Transverse colon (tissue), 4 donors: ENCODE measurements at regions of chr22 and their contacts with region 1.

Region 1: DNA sequence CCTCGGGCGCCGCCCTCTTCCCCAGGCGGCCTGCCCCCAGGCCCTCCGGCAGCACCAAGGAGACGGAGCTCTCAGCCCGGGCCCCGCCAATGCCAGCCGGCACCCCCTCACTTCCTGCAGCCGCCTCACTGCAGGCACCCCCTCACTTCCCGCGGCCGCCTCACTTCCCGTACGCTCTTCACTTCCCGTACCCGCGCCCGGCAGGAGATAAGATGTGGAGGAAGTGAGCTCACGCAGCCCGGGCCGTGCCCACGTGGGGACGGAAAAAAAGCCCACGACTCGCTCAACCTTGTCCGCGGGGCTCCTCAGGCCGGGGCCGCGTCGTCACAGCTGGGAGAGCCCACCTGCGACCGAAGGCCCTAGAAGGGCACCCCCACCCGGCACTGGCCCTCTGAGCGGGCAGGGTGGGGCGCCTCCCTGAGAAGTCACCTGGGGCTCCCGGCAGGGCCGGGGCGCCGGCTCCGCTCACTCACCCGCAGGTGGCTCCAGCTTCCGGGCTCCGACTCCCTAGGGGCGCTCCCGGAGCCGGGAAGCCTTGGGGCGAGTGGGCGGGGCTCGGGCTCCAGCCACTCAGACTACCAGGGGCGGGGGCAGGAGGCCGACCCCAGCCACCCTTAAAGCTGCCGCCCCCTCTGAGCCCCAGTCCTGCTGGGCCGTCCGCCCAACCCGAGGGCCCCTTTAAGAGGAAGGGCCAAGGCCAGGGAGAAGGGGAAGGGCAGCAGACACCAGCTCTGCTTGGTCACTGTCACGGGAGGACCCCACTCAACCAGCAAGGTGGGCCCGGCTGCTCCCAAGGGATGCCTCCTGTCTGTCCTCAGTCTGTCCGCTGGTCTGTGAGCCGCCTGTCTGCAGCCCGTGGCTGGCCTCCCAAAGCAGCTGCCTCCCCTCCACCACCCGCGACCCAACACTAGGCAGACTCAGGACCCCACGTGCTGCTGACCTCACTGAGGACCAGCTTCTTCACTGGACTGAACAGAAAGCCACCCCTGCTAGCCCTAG is 31.4 kb downstream of the PISD start:
- DNase-seq: peak; percentile 81
- H3K4me3 ChIP-seq: peak overlapping the region; percentile 68 to 90 (median 78)
- H3K27ac ChIP-seq: peak overlapping the region; percentile 84 to 89 (median 87)
- H3K4me1 ChIP-seq: peaks cover 19 to 50% (median 39%) of the 10 kb centered on the region in 4 donors
- H3K27me3 ChIP-seq: no peaks in the 10 kb centered on the region
- CTCF ChIP-seq: no peak
- EP300 ChIP-seq: no peak
- POLR2A ChIP-seq: peak; percentile 27

Region 2: GRCh38 chr22:31489604-31490495 is 140.8 kb before region 1 on chr22 and contains the start of gene EIF4ENIF1:
- in situ Hi-C with region 1: loop called in 1 of 4 experiments (anchors 25 kb)
- intact Hi-C with region 1: loop called (anchors 5 kb)
- DNase-seq: peak; percentile 89
- H3K4me3 ChIP-seq: peak within 1 kb of the TSS; percentile 68 to 94 (median 90)
- H3K27ac ChIP-seq: peak within 1 kb of the TSS; percentile 93 to 99 (median 96)
- H3K4me1 ChIP-seq: peaks cover 16 to 30% (median 22%) of the 10 kb centered on the region in 4 donors
- H3K27me3 ChIP-seq: no peaks in the 10 kb centered on the region
- CTCF ChIP-seq: peak in 1 of 5 experiments; percentile 11
- EP300 ChIP-seq: no peak
- POLR2A ChIP-seq: peak; percentile 67
- total RNA-seq, gene EIF4ENIF1: 14.4 to 66.1 (median 17.2) TPM

Region 3: GRCh38 chr22:31496007-31496734 is 134.5 kb before region 1 on chr22 and contains the start of gene SFI1:
- in situ Hi-C with region 1: loop called in 1 of 4 experiments (anchors 25 kb)
- intact Hi-C with region 1: no loop called
- DNase-seq: peak; percentile 95
- H3K4me3 ChIP-seq: peak within 1 kb of the TSS; percentile 49 to 74 (median 60)
- H3K27ac ChIP-seq: peak within 1 kb of the TSS; percentile 84 to 94 (median 88)
- H3K4me1 ChIP-seq: peaks cover 7 to 23% (median 14%) of the 10 kb centered on the region in 4 donors
- H3K27me3 ChIP-seq: no peaks in the 10 kb centered on the region
- CTCF ChIP-seq: peak; percentile 14 to 37 (median 27)
- EP300 ChIP-seq: no peak
- POLR2A ChIP-seq: peak; percentile 58
- total RNA-seq, gene SFI1: 55.3 to 157 (median 90.1) TPM

Region 4: DNA sequence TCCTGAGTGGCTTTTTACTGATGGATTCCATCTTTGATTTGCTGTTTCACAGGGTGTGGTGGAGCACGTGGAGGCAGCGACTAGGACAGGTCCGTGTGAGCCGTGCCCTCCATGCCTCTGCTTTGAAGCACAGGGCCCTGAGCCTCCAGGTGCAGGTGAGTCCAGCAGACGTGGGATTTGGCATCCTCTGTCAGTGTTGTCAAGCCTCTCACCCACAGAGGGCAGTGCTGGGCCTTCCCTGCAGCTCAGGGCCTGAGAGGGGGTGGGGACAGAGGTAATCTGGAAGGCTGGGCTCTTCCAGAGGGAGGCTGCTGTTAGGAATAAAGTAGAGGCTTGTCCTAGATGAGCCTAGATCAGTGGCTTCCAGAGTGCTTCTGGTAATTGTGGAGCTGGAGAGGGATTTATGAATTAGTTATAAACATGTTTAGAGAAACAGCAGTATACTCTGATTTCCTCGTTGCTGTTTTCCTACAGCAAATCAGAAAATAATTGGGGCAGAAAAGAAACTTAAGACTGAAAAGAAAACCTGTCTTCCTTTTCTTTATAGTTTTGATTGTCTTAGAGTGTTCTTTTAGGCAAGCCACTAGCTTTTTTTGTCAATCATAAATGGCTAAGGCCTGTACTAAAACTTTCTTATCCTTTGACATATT is 69.3 kb before region 1 on chr22:
- in situ Hi-C with region 1: loop called in 3 of 4 experiments (anchors 5 to 10 kb)
- intact Hi-C with region 1: loop called (anchors 5 kb)
- DNase-seq: peak; percentile 84
- H3K4me3 ChIP-seq: no peak overlapping the region
- H3K27ac ChIP-seq: no peak overlapping the region
- H3K4me1 ChIP-seq: no peaks in the 10 kb centered on the region
- H3K27me3 ChIP-seq: no peaks in the 10 kb centered on the region
- CTCF ChIP-seq: peak; percentile 63 to 77 (median 66)
- EP300 ChIP-seq: no peak
- POLR2A ChIP-seq: no peak

Region 5: DNA sequence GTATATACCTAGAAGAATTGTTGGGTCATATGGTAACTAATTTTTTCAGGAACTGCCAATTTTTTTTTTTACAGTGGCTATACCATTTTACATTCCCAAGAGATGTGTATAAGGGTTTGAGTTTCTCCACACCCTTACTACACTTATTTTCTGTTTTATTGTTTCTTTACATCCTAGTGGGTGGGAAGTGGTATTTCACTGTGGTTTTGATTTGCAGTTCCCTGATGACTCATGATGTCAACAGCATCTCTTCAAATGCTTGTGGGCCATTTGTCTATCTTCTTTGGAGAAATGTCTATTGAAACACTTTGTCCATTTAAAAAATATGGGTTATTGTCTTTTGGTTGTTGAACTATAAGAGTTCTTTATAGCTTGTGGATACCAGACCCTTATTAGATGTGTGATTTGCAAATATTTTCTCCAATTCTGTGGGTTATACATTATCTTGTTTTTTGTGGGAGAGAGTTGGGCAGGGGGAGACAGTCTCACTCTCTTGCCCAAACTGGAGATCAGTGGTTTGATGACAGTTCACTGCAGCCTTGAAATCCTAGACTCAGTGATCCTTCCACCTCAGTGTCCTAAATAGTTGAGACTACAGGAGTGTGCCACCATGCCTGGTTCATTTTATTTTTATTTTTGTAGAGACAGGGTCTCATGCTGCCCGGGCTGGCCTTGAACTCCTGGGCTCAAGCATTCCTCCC is 61.7 kb after region 1 on chr22:
- in situ Hi-C with region 1: no loop called
- intact Hi-C with region 1: no loop called
- DNase-seq: no peak
- H3K4me3 ChIP-seq: no peak overlapping the region
- H3K27ac ChIP-seq: no peak overlapping the region
- H3K4me1 ChIP-seq: no peaks in the 10 kb centered on the region
- H3K27me3 ChIP-seq: no peaks in the 10 kb centered on the region
- CTCF ChIP-seq: no peak
- EP300 ChIP-seq: no peak
- POLR2A ChIP-seq: no peak

Region 6: DNA sequence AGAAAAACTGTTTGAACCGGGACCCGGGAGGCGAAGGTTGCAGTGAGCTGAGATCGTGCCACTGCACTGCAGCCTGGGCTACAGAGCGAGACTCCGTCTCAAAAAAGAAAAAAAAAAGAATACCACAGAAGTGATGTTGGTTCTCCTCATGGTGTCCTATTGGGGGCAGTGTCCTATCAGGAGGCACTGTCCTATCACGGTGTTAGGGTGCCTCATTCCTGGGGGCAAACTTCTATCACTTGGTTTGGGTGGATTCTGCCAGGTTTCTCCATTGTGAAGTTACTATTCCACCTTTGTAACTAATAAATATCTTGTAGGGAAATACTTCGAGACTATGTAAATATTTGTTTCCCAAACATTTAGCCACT is 99.7 kb after region 1 on chr22:
- in situ Hi-C with region 1: no loop called
- intact Hi-C with region 1: no loop called
- DNase-seq: no peak
- H3K4me3 ChIP-seq: no peak overlapping the region
- H3K27ac ChIP-seq: no peak overlapping the region
- H3K4me1 ChIP-seq: peaks cover 10 to 15% (median 11%) of the 10 kb centered on the region in 4 donors
- H3K27me3 ChIP-seq: no peaks in the 10 kb centered on the region
- CTCF ChIP-seq: no peak
- EP300 ChIP-seq: no peak
- POLR2A ChIP-seq: no peak

Region 7: GRCh38 chr22:31776231-31776630 is 145.6 kb after region 1 on chr22:
- in situ Hi-C with region 1: no loop called
- intact Hi-C with region 1: no loop called
- DNase-seq: no peak
- H3K4me3 ChIP-seq: no peak overlapping the region
- H3K27ac ChIP-seq: no peak overlapping the region
- H3K4me1 ChIP-seq: no peaks in the 10 kb centered on the region
- H3K27me3 ChIP-seq: no peaks in the 10 kb centered on the region
- CTCF ChIP-seq: no peak
- EP300 ChIP-seq: no peak
- POLR2A ChIP-seq: no peak

Region 8: DNA sequence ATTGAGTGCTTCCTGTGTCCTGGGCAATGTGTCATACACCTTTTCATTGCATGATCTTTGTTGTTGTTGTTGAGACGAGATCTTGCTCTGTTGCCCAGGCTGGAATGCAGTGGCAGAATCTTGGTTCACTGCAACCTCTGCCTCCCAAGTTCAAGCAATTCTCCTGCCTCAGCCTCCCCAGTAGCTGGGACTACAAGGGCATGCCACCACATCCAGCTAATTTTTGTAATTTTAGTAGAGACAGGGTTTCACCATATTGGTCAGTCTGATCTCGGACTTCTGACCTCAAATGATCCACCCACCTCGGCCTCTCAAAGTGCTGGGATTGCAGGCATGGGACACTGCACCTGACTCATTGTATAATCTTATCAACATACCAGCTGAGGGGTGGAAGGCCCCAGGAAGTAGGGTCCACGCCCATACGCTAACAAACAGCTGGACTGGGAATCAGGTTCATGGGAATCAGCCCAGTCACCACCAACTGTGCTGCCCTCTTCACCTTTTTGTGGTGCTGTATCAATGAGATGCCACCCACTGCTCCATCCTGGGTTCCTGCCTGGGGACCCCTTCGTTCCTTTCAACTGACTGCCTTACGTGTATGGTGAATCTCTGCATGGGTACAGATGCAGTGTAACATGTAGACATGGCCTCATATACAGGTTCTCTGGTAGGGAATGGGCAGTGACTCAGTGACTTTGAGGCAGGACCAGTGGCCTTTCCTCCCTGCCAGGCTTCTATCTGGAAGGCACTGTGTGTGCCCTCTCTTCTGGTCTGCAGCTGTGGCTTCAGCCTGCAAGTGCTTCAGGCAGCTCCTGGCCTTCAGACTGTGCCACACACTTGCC is 281.2 kb after region 1 on chr22:
- in situ Hi-C with region 1: no loop called
- intact Hi-C with region 1: no loop called
- DNase-seq: peak; percentile 60
- H3K4me3 ChIP-seq: no peak overlapping the region
- H3K27ac ChIP-seq: peak overlapping the region in 3 of 4 donors; percentile 33 to 45 (median 41)
- H3K4me1 ChIP-seq: peaks cover 0 to 14% (median 2%) of the 10 kb centered on the region in 4 donors
- H3K27me3 ChIP-seq: no peaks in the 10 kb centered on the region
- CTCF ChIP-seq: no peak
- EP300 ChIP-seq: no peak
- POLR2A ChIP-seq: no peak